ENCODE measurements at regions of chr3 and their contacts with region 1.

Region 1: GRCh38 chr3:89113903-89114840 is 6.8 kb downstream of the EPHA3 start:
- DNase-seq: peak; percentile 85

Region 2: DNA sequence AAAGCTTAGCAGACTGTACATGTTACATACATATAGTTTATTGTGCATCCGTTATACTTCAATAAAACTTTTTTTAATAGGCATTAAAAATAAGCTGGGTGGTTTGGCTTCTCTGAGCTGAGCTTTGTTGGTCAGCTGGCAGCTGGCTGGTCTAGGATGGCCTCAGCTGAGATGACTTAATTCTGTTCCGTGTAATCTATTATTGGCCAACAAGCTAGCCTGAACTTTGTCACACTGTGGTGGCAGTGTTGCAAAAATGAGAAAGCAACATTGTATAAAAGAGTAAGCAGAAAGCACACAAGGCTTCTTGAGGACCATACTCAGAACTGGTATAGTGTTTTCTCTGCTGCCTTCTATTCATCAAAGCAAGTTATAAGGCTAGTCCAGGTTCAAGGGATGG is 1100.6 kb before region 1 on chr3:
- intact Hi-C with region 1: loop called in 1 of 2 experiments (anchors 5 kb)
- DNase-seq: no peak

Region 3: DNA sequence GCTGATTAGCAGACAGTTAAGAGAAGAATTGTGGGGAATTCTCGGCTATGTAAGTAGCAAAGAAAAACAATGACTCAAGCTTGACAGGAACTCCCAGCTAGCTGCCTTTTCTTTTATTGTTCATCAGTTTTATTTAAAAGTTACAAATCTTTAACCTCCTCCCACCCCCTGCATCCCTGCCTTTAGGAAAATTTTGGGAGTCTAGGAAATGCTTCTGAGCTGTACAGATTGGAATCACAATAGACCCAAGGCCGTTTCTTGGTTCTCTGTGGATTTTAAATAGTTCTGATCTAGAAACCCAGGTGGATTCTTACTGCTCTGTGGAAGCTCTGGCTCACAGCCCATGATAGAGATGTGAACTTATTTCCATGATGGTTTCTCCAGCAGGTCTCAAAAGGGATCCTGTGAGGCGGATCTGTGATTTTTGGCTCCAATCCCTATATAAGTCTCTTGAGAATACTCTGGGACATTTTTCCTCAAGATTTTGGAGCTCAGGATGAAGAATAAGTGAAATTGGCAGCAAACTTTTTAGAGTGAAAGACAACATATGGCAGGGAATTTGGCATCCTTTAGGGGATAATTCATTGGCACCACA is 305.6 kb after region 1 on chr3:
- intact Hi-C with region 1: loop called in 1 of 2 experiments (anchors 10 kb)
- DNase-seq: no peak